Mammary epithelial cell (primary cell): ENCODE measurements at regions of chr2 and their contacts with region 1.

Region 1: DNA sequence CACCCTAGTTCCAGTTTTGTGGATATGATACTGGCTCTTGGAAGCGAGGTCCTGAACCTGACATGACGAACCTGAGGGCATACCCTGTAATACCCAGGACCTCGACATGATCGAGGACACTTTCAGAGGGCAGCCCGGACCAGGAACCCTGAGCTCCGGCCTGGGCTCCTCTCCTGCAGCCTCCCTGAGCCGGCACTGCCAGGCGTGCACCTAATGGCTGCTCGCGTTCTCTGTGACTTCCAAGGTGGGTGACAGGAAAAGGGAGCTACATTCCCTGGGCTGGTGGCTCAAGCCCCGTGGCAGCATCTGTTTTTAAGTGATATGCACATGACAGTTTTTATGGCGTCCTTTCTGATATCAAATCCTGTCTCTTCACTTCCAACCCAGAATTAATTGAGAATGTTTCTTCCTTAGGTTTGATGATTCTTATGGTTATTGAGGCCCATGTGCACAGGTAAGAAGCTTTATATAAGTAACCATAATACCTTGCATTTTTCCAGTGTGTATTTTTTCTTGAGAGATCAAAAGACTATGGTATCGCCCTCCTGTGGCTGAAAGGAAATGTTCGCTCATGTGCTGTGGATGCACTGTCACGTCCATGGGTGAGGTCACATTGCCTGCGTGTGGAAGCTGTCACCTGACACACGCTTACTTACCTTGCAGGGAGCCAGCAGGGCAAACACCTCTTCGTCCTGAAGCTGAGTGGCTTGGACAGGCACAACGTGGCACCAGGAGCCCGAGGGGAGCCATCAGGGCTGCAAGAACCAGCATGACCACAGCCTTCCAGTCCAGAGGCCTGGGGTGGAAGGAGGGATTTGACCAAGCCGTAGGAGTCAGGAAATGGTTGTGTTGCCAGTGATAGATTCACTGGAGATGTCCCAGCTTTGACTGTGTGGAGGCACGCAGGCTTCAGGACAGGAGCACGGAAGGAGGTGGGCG is 367.4 kb upstream of the MYT1L start:
- DNase-seq: no peak
- H3K4me3 ChIP-seq: no peak overlapping the region
- H3K27ac ChIP-seq: no peak overlapping the region
- H3K4me1 ChIP-seq: no peaks in the 10 kb centered on the region
- H3K27me3 ChIP-seq: no peaks in the 10 kb centered on the region
- CTCF ChIP-seq: no peak

Region 2: GRCh38 chr2:2662037-2662850 is 36.2 kb before region 1 on chr2:
- CTCF ChIA-PET with region 1: no interaction called
- dilution Hi-C with region 1: no loop called
- in situ Hi-C with region 1: no loop called
- intact Hi-C with region 1: no loop called
- DNase-seq: no peak
- H3K4me3 ChIP-seq: no peak overlapping the region
- H3K27ac ChIP-seq: no peak overlapping the region
- H3K4me1 ChIP-seq: no peaks in the 10 kb centered on the region
- H3K27me3 ChIP-seq: no peaks in the 10 kb centered on the region
- CTCF ChIP-seq: no peak

Region 3: GRCh38 chr2:2775018-2775417 is 76.6 kb after region 1 on chr2:
- CTCF ChIA-PET with region 1: no interaction called
- dilution Hi-C with region 1: loop called (anchors 5 kb)
- in situ Hi-C with region 1: no loop called
- intact Hi-C with region 1: no loop called
- DNase-seq: peak; percentile 4
- H3K4me3 ChIP-seq: no peak overlapping the region
- H3K27ac ChIP-seq: no peak overlapping the region
- H3K4me1 ChIP-seq: no peaks in the 10 kb centered on the region
- H3K27me3 ChIP-seq: no peaks in the 10 kb centered on the region
- CTCF ChIP-seq: no peak

Region 4: DNA sequence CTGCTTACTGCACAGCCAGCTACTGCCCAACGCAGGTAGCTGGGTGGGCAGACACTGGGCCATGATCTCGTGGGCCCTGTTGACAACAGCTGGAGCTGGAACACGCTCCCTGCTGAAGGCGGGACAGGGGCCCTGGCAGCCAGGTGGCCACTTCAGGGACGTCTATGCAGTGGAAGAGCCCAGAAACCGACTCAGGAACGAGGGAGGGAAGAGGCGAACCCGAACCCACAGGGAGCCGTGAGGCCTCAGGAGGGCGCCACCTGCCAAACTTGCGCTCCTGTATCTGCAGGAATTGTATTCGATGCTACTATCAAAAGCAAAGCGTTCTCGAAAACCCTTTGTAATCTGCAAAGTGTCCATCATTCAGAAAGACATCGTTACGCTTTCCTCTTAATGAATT is 480.8 kb after region 1 on chr2:
- CTCF ChIA-PET with region 1: no interaction called
- dilution Hi-C with region 1: no loop called
- in situ Hi-C with region 1: no loop called
- intact Hi-C with region 1: no loop called
- DNase-seq: no peak
- H3K4me3 ChIP-seq: no peak overlapping the region
- H3K27ac ChIP-seq: no peak overlapping the region
- H3K4me1 ChIP-seq: no peaks in the 10 kb centered on the region
- H3K27me3 ChIP-seq: no peaks in the 10 kb centered on the region
- CTCF ChIP-seq: no peak